MCF 10A (cell line): ENCODE measurements at regions of chr10 and their contacts with region 1.

Region 1: DNA sequence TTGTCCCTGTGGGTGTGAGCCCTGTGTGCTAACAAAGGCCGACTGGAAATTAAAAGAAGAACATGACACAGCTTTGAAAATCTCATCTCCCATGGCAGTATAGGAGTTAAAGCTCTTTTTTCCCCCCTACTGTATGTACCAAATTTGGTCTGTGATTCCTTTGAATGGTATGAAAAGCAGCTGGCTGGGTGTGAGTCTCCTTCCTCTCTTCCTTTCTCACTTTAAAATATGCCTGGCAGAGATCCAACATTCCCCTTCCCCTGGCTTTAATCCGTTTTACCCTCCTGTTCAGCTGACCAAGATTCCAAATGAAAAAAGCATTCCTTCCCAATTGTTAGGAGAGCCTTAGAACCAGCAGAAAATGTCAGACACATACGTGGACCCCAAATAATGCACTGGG is 225.0 kb upstream of the CELF2 start:
- DNase-seq: peak; percentile 70
- H3K4me3 Mint-ChIP-seq: peak overlapping the region; percentile 56
- H3K27ac Mint-ChIP-seq: peak overlapping the region; percentile 83
- H3K4me1 Mint-ChIP-seq: peaks cover 57% of the 10 kb centered on the region
- H3K27me3 Mint-ChIP-seq: no peaks in the 10 kb centered on the region
- CTCF ChIP-seq: no peak

Region 2: GRCh38 chr10:10772874-10773508 is 19.7 kb before region 1 on chr10:
- CTCF ChIA-PET with region 1: no interaction called
- POLR2A ChIA-PET with region 1: no interaction called
- intact Hi-C with region 1: no loop called
- DNase-seq: no peak
- H3K4me3 Mint-ChIP-seq: no peak overlapping the region
- H3K27ac Mint-ChIP-seq: no peak overlapping the region
- H3K4me1 Mint-ChIP-seq: peaks cover 12% of the 10 kb centered on the region
- H3K27me3 Mint-ChIP-seq: no peaks in the 10 kb centered on the region
- CTCF ChIP-seq: no peak

Region 3: DNA sequence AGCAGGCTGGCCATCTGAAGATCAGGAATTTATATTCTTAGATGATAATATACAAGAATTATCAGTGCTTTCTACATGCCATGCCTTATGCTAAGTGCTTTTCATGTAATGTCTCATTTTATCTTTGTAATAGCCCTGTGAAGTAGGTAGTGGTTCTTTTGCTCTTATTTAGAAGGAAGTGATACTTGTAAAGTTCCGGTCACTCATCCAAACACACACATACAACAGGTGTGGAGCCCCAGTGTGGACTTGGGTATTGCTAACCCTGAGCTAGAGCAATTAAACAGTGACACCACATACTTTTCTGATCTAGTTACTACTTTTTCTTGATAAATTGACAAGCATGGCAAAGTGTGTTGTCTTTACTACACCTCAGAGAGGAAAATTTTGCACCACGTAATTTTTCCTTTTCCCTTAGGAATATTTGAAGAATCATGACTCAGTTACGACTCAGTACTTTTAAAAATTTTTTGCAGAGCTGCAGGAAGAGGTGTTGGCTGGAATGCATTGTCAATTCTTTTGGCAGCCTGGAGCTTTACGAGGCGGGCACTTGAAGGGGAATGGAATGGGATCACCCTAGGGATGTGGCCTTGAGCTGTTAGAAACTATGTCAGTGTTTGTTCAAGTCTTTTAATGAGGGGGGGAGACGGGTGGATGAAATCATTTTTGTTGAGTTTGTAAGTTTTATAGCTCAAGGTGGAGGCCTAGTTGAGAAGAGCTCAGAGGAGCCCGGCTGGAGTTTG is 12.5 kb after region 1 on chr10:
- CTCF ChIA-PET with region 1: interaction called, 5 read pairs
- POLR2A ChIA-PET with region 1: interaction called, 18 read pairs
- intact Hi-C with region 1: no loop called
- DNase-seq: peak; percentile 55
- H3K4me3 Mint-ChIP-seq: peak overlapping the region; percentile 2
- H3K27ac Mint-ChIP-seq: peak overlapping the region; percentile 29
- H3K4me1 Mint-ChIP-seq: peaks cover 21% of the 10 kb centered on the region
- H3K27me3 Mint-ChIP-seq: no peaks in the 10 kb centered on the region
- CTCF ChIP-seq: no peak

Region 4: DNA sequence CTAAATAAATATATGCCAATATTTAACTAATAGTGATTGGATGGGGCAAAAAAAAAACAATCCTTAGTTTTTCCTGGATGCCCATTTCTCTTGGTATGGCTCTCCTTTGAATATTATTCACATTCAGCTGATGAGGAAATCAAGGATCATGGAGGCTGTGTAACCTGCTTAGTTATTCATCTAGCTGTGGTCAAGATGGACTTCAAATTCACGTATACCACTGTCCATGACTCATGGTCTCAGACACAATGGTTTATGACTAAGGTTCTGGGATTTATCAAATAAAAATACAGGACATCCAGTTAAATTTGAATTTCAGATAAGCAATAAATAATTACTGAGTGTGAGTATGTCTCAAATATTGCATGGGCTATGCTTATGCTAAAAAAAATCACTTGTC is 33.4 kb after region 1 on chr10:
- CTCF ChIA-PET with region 1: no interaction called
- POLR2A ChIA-PET with region 1: interaction called, 4 read pairs
- intact Hi-C with region 1: loop called (anchors 2 kb)
- DNase-seq: peak; percentile 66
- H3K4me3 Mint-ChIP-seq: no peak overlapping the region
- H3K27ac Mint-ChIP-seq: no peak overlapping the region
- H3K4me1 Mint-ChIP-seq: peaks cover 10% of the 10 kb centered on the region
- H3K27me3 Mint-ChIP-seq: no peaks in the 10 kb centered on the region
- CTCF ChIP-seq: no peak